ENCODE measurements at regions of chr15 and their contacts with region 1.

Region 1: GRCh38 chr15:53716909-53717876 is 42.3 kb downstream of the WDR72 start:
- DNase-seq: peak; percentile 20
- ATAC-seq: peak; percentile 48; the same call in 1 of the 3 replicates
- H3K4me3 ChIP-seq: no peak overlapping the region
- H3K27ac ChIP-seq: no peak overlapping the region
- H3K4me1 ChIP-seq: peaks cover 6% of the 10 kb centered on the region
- H3K27me3 ChIP-seq: no peaks in the 10 kb centered on the region
- CTCF ChIP-seq: peak; percentile 68
- EP300 ChIP-seq: no peak
- POLR2A ChIP-seq: no peak
- RAD21 ChIP-seq: no peak

Region 2: GRCh38 chr15:52765785-52766184 is 951.4 kb before region 1 on chr15:
- CTCF ChIA-PET with region 1: interaction called, 7 read pairs
- POLR2A ChIA-PET with region 1: no interaction called
- in situ Hi-C with region 1: no loop called
- intact Hi-C with region 1: loop called (anchors 5 kb)
- DNase-seq: peak; percentile 33
- ATAC-seq: peak; percentile 84
- H3K4me3 ChIP-seq: no peak overlapping the region
- H3K27ac ChIP-seq: no peak overlapping the region
- H3K4me1 ChIP-seq: peaks cover 11% of the 10 kb centered on the region
- H3K27me3 ChIP-seq: no peaks in the 10 kb centered on the region
- CTCF ChIP-seq: peak; percentile 64
- EP300 ChIP-seq: no peak
- POLR2A ChIP-seq: no peak
- RAD21 ChIP-seq: peak; percentile 52; the same call in 1 of the 2 replicates

Region 3: GRCh38 chr15:53197426-53197839 is 519.8 kb before region 1 on chr15:
- CTCF ChIA-PET with region 1: no interaction called
- POLR2A ChIA-PET with region 1: no interaction called
- in situ Hi-C with region 1: no loop called
- intact Hi-C with region 1: loop called (anchors 10 kb)
- DNase-seq: peak; percentile 44
- ATAC-seq: peak; percentile 95
- H3K4me3 ChIP-seq: peak overlapping the region in 1 of 3 experiments; percentile 26; a peak in 1 of 6 replicates
- H3K27ac ChIP-seq: no peak overlapping the region
- H3K4me1 ChIP-seq: peaks cover 7% of the 10 kb centered on the region
- H3K27me3 ChIP-seq: no peaks in the 10 kb centered on the region
- CTCF ChIP-seq: peak; percentile 90
- EP300 ChIP-seq: peak in 1 of 2 experiments; percentile 16; a peak in 1 of 4 replicates
- POLR2A ChIP-seq: no peak
- RAD21 ChIP-seq: peak; percentile 90